ENCODE measurements at regions of chr11 and their contacts with region 1.

Region 1: GRCh38 chr11:121933694-121934093 is 182.3 kb downstream of the BLID start:
- H3K4me3 Mint-ChIP-seq: no peak overlapping the region
- H3K27ac Mint-ChIP-seq: no peak overlapping the region
- H3K4me1 Mint-ChIP-seq: no peaks in the 10 kb centered on the region
- H3K27me3 Mint-ChIP-seq: peaks cover 24% of the 10 kb centered on the region

Region 2: GRCh38 chr11:121904148-121904547 is 29.5 kb before region 1 on chr11:
- intact Hi-C with region 1: loop called (anchors 2 kb)
- H3K4me3 Mint-ChIP-seq: peak overlapping the region; percentile 4
- H3K27ac Mint-ChIP-seq: peak overlapping the region; percentile 57
- H3K4me1 Mint-ChIP-seq: peaks cover 50% of the 10 kb centered on the region
- H3K27me3 Mint-ChIP-seq: peaks cover 7% of the 10 kb centered on the region

Region 3: GRCh38 chr11:121996574-121996973 is 62.9 kb after region 1 on chr11:
- intact Hi-C with region 1: no loop called
- H3K4me3 Mint-ChIP-seq: no peak overlapping the region
- H3K27ac Mint-ChIP-seq: no peak overlapping the region
- H3K4me1 Mint-ChIP-seq: no peaks in the 10 kb centered on the region
- H3K27me3 Mint-ChIP-seq: no peaks in the 10 kb centered on the region

Measured in dendritic cell treated with granulocyte-macrophage colony-stimulating factor and Interleukin-4, amounts not matched to agents 40 ng/mL and 50 ng/mL, for 4 days (primary cell).